HEK293T (cell line): ENCODE measurements at regions of chr1 and their contacts with region 1.

Region 1: GRCh38 chr1:85762804-85763203 is 54.6 kb upstream of the ZNHIT6 start:
- DNase-seq: no peak

Region 2: GRCh38 chr1:85743814-85744213 is 19.0 kb before region 1 on chr1:
- CTCF ChIA-PET with region 1: interaction called, 13 read pairs
- POLR2A ChIA-PET with region 1: no interaction called
- DNase-seq: no peak